ENCODE measurements at regions of chr20 and their contacts with region 1.

Region 1: GRCh38 chr20:3710703-3711483 is 1.5 kb downstream of the SIGLEC1 start:
- DNase-seq: peak in 1 of 2 experiments; percentile 87
- H3K4me3 ChIP-seq: no peak overlapping the region
- H3K4me3 Mint-ChIP-seq: no peak overlapping the region
- H3K27ac Mint-ChIP-seq: no peak overlapping the region
- H3K4me1 ChIP-seq: no peaks in the 10 kb centered on the region
- H3K4me1 Mint-ChIP-seq: no peaks in the 10 kb centered on the region
- H3K27me3 ChIP-seq: no peaks in the 10 kb centered on the region
- H3K27me3 Mint-ChIP-seq: peaks cover 5% of the 10 kb centered on the region
- CTCF ChIP-seq: peak; percentile 94 to 97

Region 2: DNA sequence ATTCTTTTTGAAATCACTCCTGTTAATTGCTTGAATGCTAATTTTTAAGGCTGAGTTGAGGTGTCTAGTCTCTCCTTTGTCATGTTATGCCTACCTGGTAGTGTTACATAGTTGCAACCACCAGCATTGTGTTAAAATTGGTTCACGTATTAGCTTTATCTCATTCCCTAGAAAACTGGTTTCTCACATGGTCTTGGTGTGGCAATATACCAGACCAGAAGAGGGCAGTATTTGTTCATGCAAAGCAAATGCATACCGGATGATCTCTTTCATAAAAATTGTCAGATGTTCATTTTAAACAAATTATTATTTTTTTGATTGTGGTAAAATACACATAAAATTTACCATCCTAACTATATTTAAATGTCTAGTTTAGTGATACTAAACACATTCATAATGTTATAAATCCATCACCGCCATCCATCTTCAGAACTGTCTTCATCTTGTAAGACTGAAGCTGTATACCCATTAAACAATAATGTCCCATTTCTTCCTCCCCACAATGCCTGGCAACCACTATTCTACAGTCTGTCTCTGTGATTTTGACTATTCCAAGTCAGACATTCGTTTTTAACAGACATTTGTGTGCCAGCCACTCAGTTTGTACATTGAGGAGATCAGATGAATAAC is 147.2 kb before region 1 on chr20:
- CTCF ChIA-PET with region 1: interaction called, 5 read pairs
- POLR2A ChIA-PET with region 1: no interaction called
- intact Hi-C with region 1: loop called (anchors 1 kb)
- DNase-seq: peak in 1 of 2 experiments; percentile 65
- H3K4me3 ChIP-seq: no peak overlapping the region
- H3K4me3 Mint-ChIP-seq: no peak overlapping the region
- H3K27ac Mint-ChIP-seq: no peak overlapping the region
- H3K4me1 ChIP-seq: no peaks in the 10 kb centered on the region
- H3K4me1 Mint-ChIP-seq: no peaks in the 10 kb centered on the region
- H3K27me3 ChIP-seq: no peaks in the 10 kb centered on the region
- H3K27me3 Mint-ChIP-seq: no peaks in the 10 kb centered on the region
- CTCF ChIP-seq: peak; percentile 71 to 76

Region 3: DNA sequence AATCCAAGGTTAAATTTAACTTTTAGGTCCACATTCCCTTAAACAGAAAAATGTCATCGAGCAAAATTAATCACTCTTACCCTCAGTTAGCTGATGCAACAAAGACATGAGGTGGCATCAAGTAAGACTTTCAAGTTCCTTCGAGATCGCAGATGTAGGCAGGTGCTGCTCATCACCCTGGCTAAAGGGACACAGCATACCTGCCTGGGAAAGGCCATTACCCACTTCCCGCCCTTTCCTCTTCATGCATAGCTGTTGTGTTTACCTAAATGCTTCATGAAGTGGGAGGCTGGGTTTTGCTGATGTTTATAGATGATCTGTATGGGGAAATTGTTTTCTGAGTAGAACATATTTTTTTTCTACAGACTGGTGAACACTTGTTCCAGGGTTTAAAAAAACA is 115.4 kb before region 1 on chr20:
- CTCF ChIA-PET with region 1: no interaction called
- POLR2A ChIA-PET with region 1: no interaction called
- intact Hi-C with region 1: no loop called
- DNase-seq: no peak
- H3K4me3 ChIP-seq: no peak overlapping the region
- H3K4me3 Mint-ChIP-seq: no peak overlapping the region
- H3K27ac Mint-ChIP-seq: no peak overlapping the region
- H3K4me1 ChIP-seq: no peaks in the 10 kb centered on the region
- H3K4me1 Mint-ChIP-seq: no peaks in the 10 kb centered on the region
- H3K27me3 ChIP-seq: no peaks in the 10 kb centered on the region
- H3K27me3 Mint-ChIP-seq: no peaks in the 10 kb centered on the region
- CTCF ChIP-seq: no peak

Region 4: DNA sequence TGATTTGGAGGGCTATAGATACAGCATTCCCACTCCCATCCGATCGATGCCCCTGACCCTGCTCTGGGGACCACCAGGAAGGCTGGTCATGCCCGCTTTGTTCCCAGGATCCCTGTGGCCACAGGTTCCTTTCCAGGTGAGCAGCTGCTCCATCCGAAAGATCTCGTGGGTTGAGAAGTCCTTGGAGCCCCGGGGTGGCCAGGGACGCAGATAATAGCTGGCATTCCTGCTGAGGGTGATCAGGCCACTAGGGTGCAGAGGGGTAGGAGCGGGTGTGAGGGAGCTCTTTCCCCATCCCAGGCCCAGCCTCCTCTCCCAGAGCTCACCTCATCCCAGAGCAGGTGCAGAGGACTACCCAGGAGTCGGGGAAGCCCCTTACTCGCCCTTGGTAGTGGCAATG is 36.4 kb before region 1 on chr20:
- CTCF ChIA-PET with region 1: interaction called, 61 read pairs
- POLR2A ChIA-PET with region 1: no interaction called
- intact Hi-C with region 1: loop called (anchors 1 kb)
- DNase-seq: no peak
- H3K4me3 ChIP-seq: no peak overlapping the region
- H3K4me3 Mint-ChIP-seq: no peak overlapping the region
- H3K27ac Mint-ChIP-seq: no peak overlapping the region
- H3K4me1 ChIP-seq: no peaks in the 10 kb centered on the region
- H3K4me1 Mint-ChIP-seq: no peaks in the 10 kb centered on the region
- H3K27me3 ChIP-seq: peaks cover 3% of the 10 kb centered on the region; the same call in 1 of the 2 replicates
- H3K27me3 Mint-ChIP-seq: peaks cover 20% of the 10 kb centered on the region
- CTCF ChIP-seq: no peak

Region 5: GRCh38 chr20:3679749-3680700 is 30.9 kb before region 1 on chr20:
- CTCF ChIA-PET with region 1: interaction called, 61 read pairs
- POLR2A ChIA-PET with region 1: no interaction called
- intact Hi-C with region 1: loop called (anchors 1 kb)
- DNase-seq: no peak
- H3K4me3 ChIP-seq: no peak overlapping the region
- H3K4me3 Mint-ChIP-seq: no peak overlapping the region
- H3K27ac Mint-ChIP-seq: no peak overlapping the region
- H3K4me1 ChIP-seq: no peaks in the 10 kb centered on the region
- H3K4me1 Mint-ChIP-seq: no peaks in the 10 kb centered on the region
- H3K27me3 ChIP-seq: no peaks in the 10 kb centered on the region
- H3K27me3 Mint-ChIP-seq: peaks cover 11% of the 10 kb centered on the region
- CTCF ChIP-seq: no peak

Region 6: DNA sequence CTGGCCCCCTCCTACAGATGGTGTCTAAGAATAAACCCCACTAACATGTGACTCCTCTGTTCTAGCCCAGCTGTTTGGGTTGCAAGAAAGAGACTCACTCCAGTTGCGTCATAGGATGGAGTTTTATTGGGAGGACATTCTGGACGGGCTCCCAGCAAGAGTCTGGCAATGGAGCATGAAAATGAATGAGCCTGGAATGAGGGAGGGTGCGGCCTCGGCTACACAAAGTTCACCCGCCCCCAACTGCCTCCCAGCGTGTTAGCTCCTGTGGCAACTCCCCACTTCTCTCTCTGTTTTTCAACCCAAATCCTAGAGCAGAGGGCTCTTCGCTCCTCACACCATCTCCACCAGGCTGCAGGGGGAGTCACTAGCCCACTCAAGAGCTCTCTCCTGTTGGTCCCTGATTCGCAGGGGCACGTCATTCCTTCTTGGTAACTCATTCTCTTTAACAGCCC is 24.0 kb before region 1 on chr20:
- CTCF ChIA-PET with region 1: interaction called, 17 read pairs
- POLR2A ChIA-PET with region 1: no interaction called
- intact Hi-C with region 1: no loop called
- DNase-seq: no peak
- H3K4me3 ChIP-seq: no peak overlapping the region
- H3K4me3 Mint-ChIP-seq: no peak overlapping the region
- H3K27ac Mint-ChIP-seq: no peak overlapping the region
- H3K4me1 ChIP-seq: no peaks in the 10 kb centered on the region
- H3K4me1 Mint-ChIP-seq: peaks cover 7% of the 10 kb centered on the region
- H3K27me3 ChIP-seq: no peaks in the 10 kb centered on the region
- H3K27me3 Mint-ChIP-seq: no peaks in the 10 kb centered on the region
- CTCF ChIP-seq: no peak

Region 7: DNA sequence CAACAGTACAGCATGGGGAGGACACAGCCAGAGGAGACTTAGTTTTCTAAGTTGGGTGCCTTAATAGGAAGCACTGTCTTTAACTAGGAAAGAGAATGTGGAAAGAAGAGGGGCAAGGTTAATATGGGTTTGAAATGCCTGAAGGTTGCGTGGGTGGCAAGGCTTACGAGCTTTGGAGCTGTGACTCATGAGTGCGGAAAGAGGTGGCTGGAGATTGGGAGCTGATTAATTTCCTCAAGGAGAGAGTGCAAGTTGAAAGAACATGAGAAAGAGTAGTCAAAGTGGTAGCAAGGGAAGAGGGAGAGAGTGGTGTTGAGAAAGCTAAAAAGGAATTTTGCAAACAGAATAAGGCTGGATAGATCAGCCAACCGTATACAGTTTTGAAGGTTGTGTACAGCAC is 695.7 kb after region 1 on chr20:
- CTCF ChIA-PET with region 1: interaction called, 13 read pairs
- POLR2A ChIA-PET with region 1: no interaction called
- intact Hi-C with region 1: no loop called
- DNase-seq: no peak
- H3K4me3 ChIP-seq: no peak overlapping the region
- H3K4me3 Mint-ChIP-seq: no peak overlapping the region
- H3K27ac Mint-ChIP-seq: no peak overlapping the region
- H3K4me1 ChIP-seq: no peaks in the 10 kb centered on the region
- H3K4me1 Mint-ChIP-seq: no peaks in the 10 kb centered on the region
- H3K27me3 ChIP-seq: no peaks in the 10 kb centered on the region; the same call in 1 of the 2 replicates
- H3K27me3 Mint-ChIP-seq: peaks cover 6% of the 10 kb centered on the region
- CTCF ChIP-seq: no peak

Measured in Caco-2 (cell line).